CD4-positive, alpha-beta T cell (primary cell): ENCODE measurements at regions of chr10 and their contacts with region 1.

Region 1: DNA sequence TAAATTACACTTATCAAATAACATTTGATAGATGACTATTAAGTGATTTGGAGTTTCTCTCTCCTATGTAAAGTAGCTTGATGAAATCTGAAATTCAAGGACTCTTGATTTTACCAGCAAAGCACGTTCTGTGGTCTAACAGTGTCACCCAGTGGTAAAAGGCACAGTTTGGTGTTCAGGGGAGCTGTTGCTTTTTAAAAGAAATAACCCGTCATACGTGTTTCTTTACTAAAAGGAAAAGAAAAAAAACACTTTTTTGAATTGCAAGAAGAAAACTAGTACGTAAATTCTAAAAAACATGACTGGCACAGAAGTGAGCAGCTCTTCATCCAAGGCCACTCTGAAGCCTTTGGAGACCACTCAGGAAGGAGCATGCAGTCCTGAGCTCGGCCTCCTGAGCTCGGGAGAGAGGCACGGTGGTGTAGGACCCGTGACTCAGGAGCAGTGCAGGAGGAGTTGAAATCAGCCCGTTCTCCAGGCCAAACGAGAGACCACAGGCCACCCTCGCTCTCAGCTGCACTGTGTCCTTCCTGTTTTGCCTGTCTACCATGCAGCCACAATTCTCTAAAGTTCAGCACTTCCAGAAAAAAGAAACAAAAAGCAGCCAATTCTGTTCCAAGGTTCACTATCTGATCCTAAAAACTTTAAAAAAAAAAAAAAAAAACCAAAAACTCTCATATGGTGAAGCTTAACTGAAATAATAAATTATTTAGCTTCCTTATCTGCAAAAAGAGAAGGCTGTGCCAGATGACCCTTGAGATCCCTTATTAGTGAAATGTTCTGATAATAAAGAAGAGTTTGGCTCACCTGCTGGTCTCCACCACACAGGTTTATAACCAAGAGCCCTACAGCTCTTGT is 212.6 kb upstream of the FRMD4A start:
- DNase-seq: peak in 6 of 14 experiments; percentile 36 to 80 (median 64)
- ATAC-seq: peak; percentile 79
- H3K4me3 ChIP-seq: peak overlapping the region; percentile 17
- H3K4me3 Mint-ChIP-seq: peak overlapping the region; percentile 76
- H3K27ac ChIP-seq: peak overlapping the region; percentile 57 to 66
- H3K27ac Mint-ChIP-seq: peak overlapping the region; percentile 98
- H3K4me1 ChIP-seq: peaks cover 64% of the 10 kb centered on the region
- H3K4me1 Mint-ChIP-seq: peaks cover 96% of the 10 kb centered on the region
- H3K27me3 ChIP-seq: no peaks in the 10 kb centered on the region
- H3K27me3 Mint-ChIP-seq: no peaks in the 10 kb centered on the region
- CTCF ChIP-seq: peak; percentile 41

Region 2: DNA sequence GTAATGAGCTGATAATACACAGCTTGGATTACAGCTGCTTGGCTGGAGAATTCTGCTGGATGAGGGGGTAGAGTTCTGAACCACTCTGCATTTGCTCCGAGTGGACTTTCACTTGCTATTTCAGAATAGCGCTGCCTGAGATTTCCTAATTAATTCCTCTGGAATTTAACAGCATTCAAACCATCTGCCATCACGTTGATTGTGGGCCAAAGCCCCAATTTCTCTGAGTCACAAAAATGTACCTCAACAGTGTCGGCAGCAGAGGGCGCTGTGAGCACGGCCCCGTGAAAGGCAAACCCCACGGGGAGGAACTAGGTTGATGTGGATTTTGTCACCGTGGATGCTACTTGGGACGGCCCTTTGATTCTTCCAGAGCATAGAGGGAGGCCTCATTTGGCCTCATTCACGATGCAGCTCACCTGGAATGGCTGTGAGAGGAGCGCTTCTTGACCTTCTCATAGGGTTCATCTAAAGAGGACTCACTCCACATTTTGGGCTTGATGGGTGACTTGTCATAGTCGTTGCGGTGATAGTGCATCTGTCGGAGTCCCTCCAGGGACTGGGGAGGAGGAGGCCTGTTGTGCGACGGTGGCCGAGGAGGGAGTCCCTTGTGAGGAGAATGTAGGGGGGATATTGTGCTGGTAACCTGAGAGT is 883.3 kb before region 1 on chr10:
- CTCF ChIA-PET with region 1: no interaction called
- POLR2A ChIA-PET with region 1: no interaction called
- intact Hi-C with region 1: loop called in 1 of 2 experiments (anchors 5 kb)
- DNase-seq: peak; percentile 52 to 81 (median 65)
- ATAC-seq: peak; percentile 82
- H3K4me3 ChIP-seq: no peak overlapping the region
- H3K4me3 Mint-ChIP-seq: no peak overlapping the region
- H3K27ac ChIP-seq: no peak overlapping the region
- H3K27ac Mint-ChIP-seq: no peak overlapping the region
- H3K4me1 ChIP-seq: peaks cover 23% of the 10 kb centered on the region
- H3K4me1 Mint-ChIP-seq: peaks cover 11% of the 10 kb centered on the region
- H3K27me3 ChIP-seq: no peaks in the 10 kb centered on the region
- H3K27me3 Mint-ChIP-seq: no peaks in the 10 kb centered on the region
- CTCF ChIP-seq: peak; percentile 89

Region 3: DNA sequence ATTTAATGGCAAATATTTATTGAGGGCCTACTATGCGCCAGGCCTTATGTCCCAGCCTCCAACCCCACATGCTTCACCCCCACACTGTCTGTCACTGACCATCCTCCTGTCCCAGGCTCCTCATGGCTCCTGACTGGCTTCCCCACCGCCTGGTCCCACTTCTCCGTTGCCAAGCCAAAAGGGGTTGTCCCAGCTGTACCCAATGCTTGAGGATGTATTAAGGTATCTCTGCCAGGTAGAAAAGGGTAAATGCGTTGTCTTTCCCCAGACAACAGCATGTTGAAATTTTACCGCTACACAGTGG is 43.7 kb before region 1 on chr10:
- CTCF ChIA-PET with region 1: interaction called, 7 read pairs
- POLR2A ChIA-PET with region 1: no interaction called
- intact Hi-C with region 1: loop called (anchors 1 to 2 kb)
- DNase-seq: no peak
- ATAC-seq: no peak
- H3K4me3 ChIP-seq: no peak overlapping the region
- H3K4me3 Mint-ChIP-seq: no peak overlapping the region
- H3K27ac ChIP-seq: no peak overlapping the region
- H3K27ac Mint-ChIP-seq: no peak overlapping the region
- H3K4me1 ChIP-seq: peaks cover 9% of the 10 kb centered on the region
- H3K4me1 Mint-ChIP-seq: peaks cover 4% of the 10 kb centered on the region
- H3K27me3 ChIP-seq: no peaks in the 10 kb centered on the region
- H3K27me3 Mint-ChIP-seq: no peaks in the 10 kb centered on the region
- CTCF ChIP-seq: no peak

Region 4: GRCh38 chr10:14556285-14556956 is 13.1 kb after region 1 on chr10:
- CTCF ChIA-PET with region 1: interaction called, 15 read pairs
- POLR2A ChIA-PET with region 1: interaction called, 22 read pairs
- intact Hi-C with region 1: no loop called
- DNase-seq: peak in 3 of 14 experiments; percentile 68 to 77 (median 71)
- ATAC-seq: peak; percentile 32
- H3K4me3 ChIP-seq: no peak overlapping the region
- H3K4me3 Mint-ChIP-seq: peak overlapping the region; percentile 45
- H3K27ac ChIP-seq: peak overlapping the region; percentile 38 to 53
- H3K27ac Mint-ChIP-seq: peak overlapping the region; percentile 98
- H3K4me1 ChIP-seq: peaks cover 86% of the 10 kb centered on the region
- H3K4me1 Mint-ChIP-seq: peaks cover 98% of the 10 kb centered on the region
- H3K27me3 ChIP-seq: no peaks in the 10 kb centered on the region
- H3K27me3 Mint-ChIP-seq: no peaks in the 10 kb centered on the region
- CTCF ChIP-seq: no peak

Region 5: GRCh38 chr10:14571866-14572507 is 28.7 kb after region 1 on chr10:
- CTCF ChIA-PET with region 1: interaction called, 5 read pairs
- POLR2A ChIA-PET with region 1: interaction called, 26 read pairs
- intact Hi-C with region 1: no loop called
- DNase-seq: peak; percentile 46 to 90 (median 64)
- ATAC-seq: peak; percentile 66
- H3K4me3 ChIP-seq: peak overlapping the region; percentile 65
- H3K4me3 Mint-ChIP-seq: peak overlapping the region; percentile 92
- H3K27ac ChIP-seq: peak overlapping the region; percentile 85 to 93
- H3K27ac Mint-ChIP-seq: peak overlapping the region; percentile 98
- H3K4me1 ChIP-seq: peaks cover 71% of the 10 kb centered on the region
- H3K4me1 Mint-ChIP-seq: peaks cover 96% of the 10 kb centered on the region
- H3K27me3 ChIP-seq: no peaks in the 10 kb centered on the region
- H3K27me3 Mint-ChIP-seq: no peaks in the 10 kb centered on the region
- CTCF ChIP-seq: no peak